CD8-positive, alpha-beta T cell (primary cell): ENCODE measurements at regions of chr12 and their contacts with region 1.

Region 1: DNA sequence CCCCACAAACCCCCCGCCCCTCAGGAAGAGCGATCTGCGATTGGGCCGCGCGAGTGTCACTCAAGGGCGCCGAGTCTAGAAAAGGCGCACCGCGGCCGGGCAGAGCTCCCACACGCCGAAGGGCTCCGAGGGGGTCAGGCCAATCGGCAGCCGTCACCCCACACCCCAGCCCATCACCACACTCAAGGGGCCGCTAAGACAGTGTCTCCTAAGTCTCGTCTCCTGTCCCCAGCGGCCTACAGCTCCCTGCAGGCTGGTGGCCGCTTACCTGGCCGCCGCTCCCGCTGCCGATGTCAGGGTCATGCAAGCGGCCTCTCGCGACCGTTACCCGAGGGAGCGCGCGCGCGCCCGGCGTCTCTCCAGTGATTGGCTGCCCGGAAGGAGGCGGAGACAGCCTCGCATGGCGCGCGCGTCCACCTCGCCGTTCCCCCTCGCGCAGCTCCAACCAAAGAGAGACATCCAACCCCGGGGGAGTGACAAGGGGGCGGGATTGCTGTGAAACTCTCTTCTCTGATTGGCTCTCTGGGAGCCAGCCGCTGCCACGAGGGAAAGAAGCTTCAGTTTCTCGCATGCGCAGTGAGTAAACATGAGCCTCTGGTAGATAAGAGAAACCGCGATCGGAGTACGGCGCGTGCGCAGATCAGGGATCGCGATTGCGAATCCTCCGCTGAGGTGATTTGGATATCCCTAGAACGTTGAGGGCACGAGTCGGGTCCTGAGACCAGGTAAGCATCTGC is at the starts of genes MPHOSPH9 and MTRFR:
- DNase-seq: peak; percentile 96 to 100 (median 98)
- ATAC-seq: peak; percentile 90
- H3K4me3 ChIP-seq: peak within 1 kb of the TSS; percentile 98 to 99
- H3K4me3 Mint-ChIP-seq: peak within 1 kb of the TSS; percentile 94
- H3K27ac ChIP-seq: peak within 1 kb of the TSS; percentile 91 to 94
- H3K27ac Mint-ChIP-seq: peak within 1 kb of the TSS; percentile 100
- H3K4me1 ChIP-seq: peaks cover 80% of the 10 kb centered on the region
- H3K4me1 Mint-ChIP-seq: peaks cover 74% of the 10 kb centered on the region
- H3K27me3 ChIP-seq: no peaks in the 10 kb centered on the region
- H3K27me3 Mint-ChIP-seq: no peaks in the 10 kb centered on the region
- CTCF ChIP-seq: no peak
- total RNA-seq, gene MPHOSPH9: 82.2 to 84.4 TPM
- total RNA-seq, gene MTRFR: 37.7 to 39.4 TPM

Region 2: GRCh38 chr12:122767691-122768090 is 465.3 kb before region 1 on chr12:
- CTCF ChIA-PET with region 1: no interaction called
- POLR2A ChIA-PET with region 1: no interaction called
- intact Hi-C with region 1: loop called in 1 of 2 experiments (anchors 5 kb)
- DNase-seq: no peak
- ATAC-seq: no peak
- H3K4me3 ChIP-seq: no peak overlapping the region
- H3K4me3 Mint-ChIP-seq: no peak overlapping the region
- H3K27ac ChIP-seq: no peak overlapping the region
- H3K27ac Mint-ChIP-seq: peak overlapping the region; percentile 37
- H3K4me1 ChIP-seq: no peaks in the 10 kb centered on the region
- H3K4me1 Mint-ChIP-seq: no peaks in the 10 kb centered on the region
- H3K27me3 ChIP-seq: no peaks in the 10 kb centered on the region
- H3K27me3 Mint-ChIP-seq: no peaks in the 10 kb centered on the region
- CTCF ChIP-seq: no peak

Region 3: GRCh38 chr12:122880668-122881067 is 352.3 kb before region 1 on chr12:
- CTCF ChIA-PET with region 1: no interaction called
- POLR2A ChIA-PET with region 1: no interaction called
- intact Hi-C with region 1: no loop called
- DNase-seq: peak in 4 of 9 experiments; percentile 43 to 58 (median 48)
- ATAC-seq: peak; percentile 35
- H3K4me3 ChIP-seq: no peak overlapping the region
- H3K4me3 Mint-ChIP-seq: no peak overlapping the region
- H3K27ac ChIP-seq: peak overlapping the region in 1 of 2 experiments; percentile 37
- H3K27ac Mint-ChIP-seq: peak overlapping the region; percentile 41
- H3K4me1 ChIP-seq: peaks cover 78% of the 10 kb centered on the region
- H3K4me1 Mint-ChIP-seq: peaks cover 91% of the 10 kb centered on the region
- H3K27me3 ChIP-seq: no peaks in the 10 kb centered on the region
- H3K27me3 Mint-ChIP-seq: no peaks in the 10 kb centered on the region
- CTCF ChIP-seq: peak; percentile 36

Region 4: GRCh38 chr12:122951979-122952892 is 280.7 kb before region 1 on chr12:
- CTCF ChIA-PET with region 1: interaction called, 3 read pairs
- POLR2A ChIA-PET with region 1: no interaction called
- intact Hi-C with region 1: loop called in 1 of 2 experiments (anchors 1 kb)
- DNase-seq: peak; percentile 50 to 85 (median 76)
- ATAC-seq: peak; percentile 99
- H3K4me3 ChIP-seq: no peak overlapping the region
- H3K4me3 Mint-ChIP-seq: no peak overlapping the region
- H3K27ac ChIP-seq: no peak overlapping the region
- H3K27ac Mint-ChIP-seq: peak overlapping the region; percentile 45
- H3K4me1 ChIP-seq: peaks cover 6% of the 10 kb centered on the region
- H3K4me1 Mint-ChIP-seq: peaks cover 4% of the 10 kb centered on the region
- H3K27me3 ChIP-seq: no peaks in the 10 kb centered on the region
- H3K27me3 Mint-ChIP-seq: no peaks in the 10 kb centered on the region
- CTCF ChIP-seq: peak; percentile 91

Region 5: DNA sequence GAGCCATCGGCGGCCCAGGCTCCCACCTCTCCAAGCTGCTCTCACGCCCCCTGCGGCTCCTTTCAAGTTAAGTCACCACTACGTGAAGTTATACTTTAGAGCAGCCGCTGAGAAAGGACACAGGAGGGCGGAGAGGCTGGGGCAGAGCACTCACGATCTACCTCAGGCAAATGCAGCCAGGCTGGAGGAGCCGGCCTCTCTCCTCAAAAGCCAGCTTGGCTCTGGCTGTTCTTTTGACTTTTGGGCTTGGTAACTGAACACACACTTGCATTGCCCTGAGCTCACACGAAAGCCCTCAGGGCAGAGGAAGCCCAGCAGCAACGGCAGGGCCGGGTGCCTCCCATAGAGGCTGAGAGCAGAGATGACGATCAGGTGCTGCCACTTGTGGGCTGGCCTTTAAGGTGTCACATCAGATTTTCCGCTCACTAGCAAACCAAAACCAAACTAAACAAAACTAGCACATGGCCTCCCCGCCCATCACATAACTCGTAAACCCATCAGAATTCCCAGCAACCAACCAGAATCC is 157.3 kb before region 1 on chr12:
- CTCF ChIA-PET with region 1: interaction called, 9 read pairs
- POLR2A ChIA-PET with region 1: interaction called, 14 read pairs
- intact Hi-C with region 1: loop called in 1 of 2 experiments (anchors 1 kb)
- DNase-seq: peak; percentile 32 to 87 (median 77)
- ATAC-seq: peak; percentile 81
- H3K4me3 ChIP-seq: peak overlapping the region; percentile 56 to 66
- H3K4me3 Mint-ChIP-seq: peak overlapping the region; percentile 90
- H3K27ac ChIP-seq: peak overlapping the region; percentile 71 to 81
- H3K27ac Mint-ChIP-seq: peak overlapping the region; percentile 95
- H3K4me1 ChIP-seq: peaks cover 49% of the 10 kb centered on the region
- H3K4me1 Mint-ChIP-seq: peaks cover 63% of the 10 kb centered on the region
- H3K27me3 ChIP-seq: no peaks in the 10 kb centered on the region
- H3K27me3 Mint-ChIP-seq: no peaks in the 10 kb centered on the region
- CTCF ChIP-seq: peak; percentile 49

Region 6: DNA sequence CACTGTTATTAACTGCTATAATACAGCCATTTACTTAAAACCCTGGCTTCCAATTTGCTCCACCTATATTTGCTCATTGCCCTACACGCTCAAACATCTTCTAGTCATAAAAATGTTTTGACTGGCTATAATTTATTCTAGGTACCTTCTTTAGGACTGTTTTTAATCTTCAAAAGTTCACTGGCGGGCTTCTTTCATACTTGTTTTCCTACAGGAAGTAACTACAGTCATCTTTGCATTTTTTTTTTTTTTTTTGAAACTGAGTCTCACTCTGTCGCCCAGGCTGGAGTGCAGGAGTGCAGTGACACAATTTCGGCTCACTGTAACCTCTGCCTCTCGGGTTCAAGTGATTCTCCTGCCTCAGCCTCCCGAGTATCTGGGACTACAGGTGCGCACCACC is 32.6 kb before region 1 on chr12:
- CTCF ChIA-PET with region 1: interaction called, 5 read pairs
- POLR2A ChIA-PET with region 1: interaction called, 18 read pairs
- intact Hi-C with region 1: loop called (anchors 5 kb)
- DNase-seq: peak in 2 of 9 experiments; percentile 13 to 25
- ATAC-seq: peak; percentile 48
- H3K4me3 ChIP-seq: no peak overlapping the region
- H3K4me3 Mint-ChIP-seq: peak overlapping the region; percentile 2
- H3K27ac ChIP-seq: peak overlapping the region; percentile 12 to 36
- H3K27ac Mint-ChIP-seq: peak overlapping the region; percentile 84
- H3K4me1 ChIP-seq: peaks cover 9% of the 10 kb centered on the region
- H3K4me1 Mint-ChIP-seq: peaks cover 20% of the 10 kb centered on the region
- H3K27me3 ChIP-seq: no peaks in the 10 kb centered on the region
- H3K27me3 Mint-ChIP-seq: no peaks in the 10 kb centered on the region
- CTCF ChIP-seq: no peak

Region 7: GRCh38 chr12:123601602-123602489 is 368.9 kb after region 1 on chr12 and contains the start of gene DDX55:
- CTCF ChIA-PET with region 1: no interaction called
- POLR2A ChIA-PET with region 1: interaction called, 10 read pairs
- intact Hi-C with region 1: no loop called
- DNase-seq: peak; percentile 71 to 94 (median 87)
- ATAC-seq: peak; percentile 93
- H3K4me3 ChIP-seq: peak within 1 kb of the TSS; percentile 92 to 94
- H3K4me3 Mint-ChIP-seq: peak within 1 kb of the TSS; percentile 98
- H3K27ac ChIP-seq: peak within 1 kb of the TSS; percentile 78 to 89
- H3K27ac Mint-ChIP-seq: peak within 1 kb of the TSS; percentile 94
- H3K4me1 ChIP-seq: peaks cover 16% of the 10 kb centered on the region
- H3K4me1 Mint-ChIP-seq: peaks cover 31% of the 10 kb centered on the region
- H3K27me3 ChIP-seq: no peaks in the 10 kb centered on the region
- H3K27me3 Mint-ChIP-seq: no peaks in the 10 kb centered on the region
- CTCF ChIP-seq: peak; percentile 42
- total RNA-seq, gene DDX55: 41.1 to 44.5 TPM